HCT116 (cell line): ENCODE measurements at regions of chr12 and their contacts with region 1.

Region 1: GRCh38 chr12:2783936-2784600 is 10.7 kb upstream of the FKBP4 start:
- DNase-seq: peak; percentile 23
- ATAC-seq: peak; percentile 98
- H3K4me3 ChIP-seq: peak overlapping the region; percentile 30 to 45
- H3K27ac ChIP-seq: no peak overlapping the region; the same call in 1 of the 2 replicates
- H3K4me1 ChIP-seq: peaks cover 0 to 12% of the 10 kb centered on the region in 2 experiments; a peak in 3 of 4 replicates
- H3K27me3 ChIP-seq: no peaks in the 10 kb centered on the region; the same call in 1 of the 2 replicates
- CTCF ChIP-seq: peak; percentile 68 to 94 (median 89)
- POLR2A ChIP-seq: no peak
- RAD21 ChIP-seq: peak; percentile 73

Region 2: GRCh38 chr12:2501464-2502191 is 282.4 kb before region 1 on chr12:
- CTCF ChIA-PET with region 1: no interaction called
- POLR2A ChIA-PET with region 1: no interaction called
- RAD21 ChIA-PET with region 1: no interaction called
- intact Hi-C with region 1: no loop called
- DNase-seq: no peak
- ATAC-seq: no peak
- H3K4me3 ChIP-seq: no peak overlapping the region
- H3K27ac ChIP-seq: no peak overlapping the region
- H3K4me1 ChIP-seq: no peaks in the 10 kb centered on the region
- H3K27me3 ChIP-seq: peaks cover 33% of the 10 kb centered on the region
- CTCF ChIP-seq: no peak
- POLR2A ChIP-seq: no peak
- RAD21 ChIP-seq: no peak

Region 3: DNA sequence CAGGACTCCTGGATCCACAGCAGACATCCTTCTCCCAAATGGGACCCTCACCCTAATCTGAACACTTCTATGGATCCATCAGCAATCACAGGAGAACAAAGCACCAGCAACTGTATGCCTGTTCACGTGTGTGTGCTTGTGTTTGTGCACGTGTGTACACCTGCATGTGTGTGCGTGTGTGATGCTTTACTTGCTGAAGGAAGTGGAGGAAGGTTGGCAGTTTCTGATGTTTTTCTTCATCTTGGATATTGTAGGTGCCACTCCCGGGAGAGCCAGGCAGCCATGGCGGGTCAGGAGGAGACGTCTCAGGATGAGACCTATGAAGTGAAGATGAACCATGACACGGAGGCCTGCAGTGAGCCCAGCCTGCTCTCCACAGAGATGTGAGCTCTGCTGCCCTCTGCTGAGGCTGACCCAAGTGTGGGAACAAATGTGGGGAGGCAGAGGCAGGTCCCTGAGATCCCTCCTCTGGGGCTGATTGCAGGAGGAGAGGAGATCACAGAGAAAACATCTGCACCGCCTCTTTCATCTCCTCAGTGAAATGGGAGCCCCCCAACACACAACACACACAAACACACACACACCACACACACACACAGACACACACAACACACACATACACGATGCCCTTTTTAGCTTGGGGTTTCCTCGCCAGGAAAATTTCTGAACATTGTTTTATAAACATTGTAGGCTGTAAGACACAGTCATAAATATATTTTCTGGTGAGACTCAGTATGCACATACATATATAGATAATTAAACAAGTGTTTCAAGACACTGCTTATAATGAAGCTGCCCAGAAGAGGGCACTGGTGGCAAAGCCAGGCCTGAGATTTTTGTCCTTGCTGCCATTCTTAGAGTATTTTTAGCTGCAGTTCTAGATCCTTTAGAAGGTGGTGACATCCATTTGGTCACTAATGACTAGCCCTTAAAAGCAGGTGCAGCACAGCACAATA is 101.5 kb before region 1 on chr12:
- CTCF ChIA-PET with region 1: interaction called, 14 read pairs
- POLR2A ChIA-PET with region 1: no interaction called
- RAD21 ChIA-PET with region 1: interaction called in 1 of 2 experiments, 4 read pairs
- intact Hi-C with region 1: loop called (anchors 2 kb)
- DNase-seq: peak; percentile 26
- ATAC-seq: peak; percentile 61
- H3K4me3 ChIP-seq: no peak overlapping the region
- H3K27ac ChIP-seq: no peak overlapping the region
- H3K4me1 ChIP-seq: no peaks in the 10 kb centered on the region
- H3K27me3 ChIP-seq: no peaks in the 10 kb centered on the region
- CTCF ChIP-seq: peak; percentile 51 to 66 (median 53); a peak in 5 of 6 replicates
- POLR2A ChIP-seq: no peak
- RAD21 ChIP-seq: peak; percentile 75

Region 4: DNA sequence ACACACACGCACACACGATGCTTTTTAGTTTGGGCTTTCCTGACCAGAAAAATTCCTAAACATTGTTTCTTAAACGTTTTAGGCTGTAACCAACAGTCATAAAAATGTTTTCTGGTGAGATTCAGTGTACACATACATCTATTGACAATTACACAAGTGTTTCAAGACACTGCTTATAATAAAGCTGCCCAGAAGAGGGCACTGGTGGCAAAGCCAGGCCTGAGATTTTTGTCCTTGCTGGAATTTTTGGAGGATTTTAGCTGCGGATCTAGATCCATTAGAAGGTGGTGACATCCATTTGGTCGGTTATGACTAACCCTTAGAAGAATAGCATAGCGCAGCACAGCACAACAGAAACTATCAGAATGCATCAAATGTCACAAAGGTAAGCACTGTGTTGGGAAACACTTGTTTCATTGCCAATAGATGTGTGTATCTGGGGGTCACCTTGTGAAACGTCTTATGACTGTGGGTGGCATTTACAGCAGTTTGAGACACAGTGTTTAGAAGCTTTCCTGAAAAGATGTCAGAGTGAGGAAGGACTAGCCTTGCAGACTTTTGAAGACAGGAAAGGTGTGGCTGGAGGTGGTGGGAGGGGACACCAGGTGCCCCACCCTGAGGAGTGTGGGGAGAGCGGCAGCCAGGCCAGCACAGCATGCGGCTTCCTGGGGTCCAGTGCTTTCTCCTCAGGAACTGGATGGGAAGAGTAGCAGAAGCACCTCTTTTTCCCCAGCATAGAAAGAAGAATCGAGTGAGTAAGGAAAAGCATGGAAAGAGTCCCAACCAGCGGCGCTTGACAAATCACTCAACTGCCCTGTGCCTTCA is 44.0 kb before region 1 on chr12:
- CTCF ChIA-PET with region 1: interaction called, 19 read pairs
- POLR2A ChIA-PET with region 1: no interaction called
- RAD21 ChIA-PET with region 1: interaction called in 1 of 2 experiments, 4 read pairs
- intact Hi-C with region 1: loop called (anchors 1 kb)
- DNase-seq: no peak
- ATAC-seq: peak; percentile 68
- H3K4me3 ChIP-seq: no peak overlapping the region
- H3K27ac ChIP-seq: no peak overlapping the region
- H3K4me1 ChIP-seq: no peaks in the 10 kb centered on the region
- H3K27me3 ChIP-seq: peaks cover 66% of the 10 kb centered on the region
- CTCF ChIP-seq: peak; percentile 57 to 72 (median 66); a peak in 5 of 6 replicates
- POLR2A ChIP-seq: no peak
- RAD21 ChIP-seq: peak; percentile 73

Region 5: DNA sequence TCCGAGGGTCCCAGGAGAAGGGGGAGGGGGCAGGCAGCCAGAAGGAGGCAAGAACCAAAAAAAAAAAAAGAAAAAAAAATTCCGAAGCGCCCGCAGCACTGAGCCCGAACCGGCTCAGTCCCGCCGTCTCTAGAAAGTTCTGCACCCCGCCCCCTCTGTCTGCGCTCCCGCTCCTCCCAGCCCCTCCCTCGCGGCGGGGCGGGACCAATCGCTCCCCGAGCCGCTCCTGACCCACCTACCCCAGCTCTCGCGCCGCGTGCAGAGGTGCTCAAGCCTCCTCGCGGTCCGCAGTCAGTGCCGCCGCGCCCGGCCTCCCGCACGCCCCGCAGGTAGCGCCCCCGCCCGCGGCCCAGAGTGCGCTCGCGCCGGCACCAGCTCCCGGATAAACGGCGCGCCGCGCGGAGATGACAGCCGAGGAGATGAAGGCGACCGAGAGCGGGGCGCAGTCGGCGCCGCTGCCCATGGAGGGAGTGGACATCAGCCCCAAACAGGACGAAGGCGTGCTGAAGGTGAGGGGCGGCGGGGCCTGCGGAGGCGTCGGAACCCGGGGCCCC is 10.7 kb after region 1 on chr12 and contains the start of gene FKBP4:
- CTCF ChIA-PET with region 1: interaction called, 30 read pairs
- POLR2A ChIA-PET with region 1: interaction called, 3 read pairs
- RAD21 ChIA-PET with region 1: no interaction called
- intact Hi-C with region 1: no loop called
- DNase-seq: peak; percentile 47
- ATAC-seq: peak; percentile 83
- H3K4me3 ChIP-seq: peak within 1 kb of the TSS; percentile 88 to 95
- H3K27ac ChIP-seq: peak within 1 kb of the TSS; percentile 92
- H3K4me1 ChIP-seq: peaks cover 10 to 20% of the 10 kb centered on the region in 2 experiments; a peak in 3 of 4 replicates
- H3K27me3 ChIP-seq: no peaks in the 10 kb centered on the region
- CTCF ChIP-seq: no peak
- POLR2A ChIP-seq: peak; percentile 85
- RAD21 ChIP-seq: no peak
- total RNA-seq, gene FKBP4: 178 TPM